Thyroid gland (tissue), 4 donors: ENCODE measurements at regions of chr10 and their contacts with region 1.

Region 1: DNA sequence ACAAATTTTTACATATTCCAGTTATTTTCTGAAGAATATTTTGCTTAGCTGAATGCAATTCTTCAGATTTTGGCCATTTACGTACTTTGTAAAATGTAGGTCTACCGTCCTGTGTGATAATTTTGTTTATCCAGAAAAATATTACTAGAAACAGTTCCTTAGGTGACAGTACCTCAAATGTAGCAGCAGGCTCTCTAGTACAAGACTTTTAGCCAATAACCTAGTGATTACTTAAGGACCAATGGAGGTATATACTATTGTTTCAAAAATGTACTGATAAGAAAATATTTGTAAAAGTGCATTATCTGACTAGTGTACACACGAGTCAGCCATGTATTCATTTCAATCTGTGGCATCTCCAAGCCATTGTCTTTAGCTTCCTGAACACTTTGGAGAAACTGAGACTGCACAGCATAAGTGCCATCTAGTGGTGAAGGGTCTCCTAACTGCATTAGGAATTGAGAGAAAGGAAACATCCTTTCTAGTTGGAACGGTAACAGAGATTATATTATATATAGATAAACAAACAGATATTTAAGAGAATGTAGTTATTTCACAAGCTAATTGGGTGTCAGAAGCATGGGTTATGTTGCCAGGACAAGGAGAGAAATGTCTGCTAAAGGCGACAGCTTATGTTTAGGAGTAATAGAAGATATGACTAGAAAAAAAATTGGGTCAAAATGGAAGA is 23.7 kb downstream of the RTKN2 start:
- DNase-seq: peak in 1 of 2 donors; percentile 7
- H3K4me3 ChIP-seq: no peak overlapping the region
- H3K27ac ChIP-seq: no peak overlapping the region
- H3K4me1 ChIP-seq: peaks cover 0 to 4% of the 10 kb centered on the region in 2 donors
- H3K27me3 ChIP-seq: no peaks in the 10 kb centered on the region
- CTCF ChIP-seq: peak; percentile 59 to 79 (median 72)
- POLR2A ChIP-seq: no peak

Region 2: DNA sequence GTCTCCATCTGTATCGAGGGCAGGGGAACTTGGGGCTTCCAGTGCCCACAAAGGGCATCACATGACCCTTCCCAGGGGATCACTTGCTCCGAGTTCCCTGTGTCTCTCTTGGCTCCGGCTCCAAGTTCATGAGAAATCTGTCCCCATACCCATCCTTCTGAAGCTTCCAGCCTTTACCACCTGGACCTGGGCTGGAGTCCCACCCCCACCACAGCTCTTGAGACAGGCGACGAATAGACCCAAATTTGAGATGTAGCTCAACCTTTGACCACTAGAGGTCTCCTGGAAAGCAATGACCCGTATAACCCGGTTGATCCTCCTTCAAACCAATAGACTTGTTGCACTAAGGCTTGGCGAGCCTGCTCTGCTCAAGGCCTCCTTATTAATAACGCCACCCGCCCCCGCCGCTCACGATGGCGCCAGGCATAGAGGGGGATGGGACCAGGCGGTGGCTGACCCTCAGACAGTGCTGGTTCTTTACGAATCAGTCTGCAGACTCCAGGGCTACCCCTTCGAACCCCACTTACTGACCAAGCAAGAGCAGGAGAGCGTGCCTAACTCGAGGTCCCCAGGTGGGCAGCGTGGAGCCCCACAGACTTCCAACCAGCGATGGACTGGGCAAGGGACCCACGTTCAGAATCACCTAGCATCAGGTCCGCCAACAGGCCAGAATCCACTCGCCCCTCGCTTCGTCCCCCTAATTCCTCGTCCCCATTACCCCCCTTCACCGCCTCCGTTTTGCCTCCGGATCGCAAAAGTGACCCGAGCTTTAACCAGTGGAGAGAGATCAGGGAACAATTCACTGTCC is 347.9 kb before region 1 on chr10:
- intact Hi-C with region 1: loop called (anchors 10 kb)
- DNase-seq: peak; percentile 55 to 62
- H3K4me3 ChIP-seq: peak overlapping the region in 2 of 3 donors; percentile 2 to 28
- H3K27ac ChIP-seq: peak overlapping the region in 2 of 3 donors; percentile 25 to 42
- H3K4me1 ChIP-seq: peaks cover 6 to 7% of the 10 kb centered on the region in 2 donors
- H3K27me3 ChIP-seq: no peaks in the 10 kb centered on the region
- CTCF ChIP-seq: peak in 5 of 6 experiments; percentile 31 to 65 (median 59)
- POLR2A ChIP-seq: peak in 1 of 2 donors; percentile 46

Region 3: DNA sequence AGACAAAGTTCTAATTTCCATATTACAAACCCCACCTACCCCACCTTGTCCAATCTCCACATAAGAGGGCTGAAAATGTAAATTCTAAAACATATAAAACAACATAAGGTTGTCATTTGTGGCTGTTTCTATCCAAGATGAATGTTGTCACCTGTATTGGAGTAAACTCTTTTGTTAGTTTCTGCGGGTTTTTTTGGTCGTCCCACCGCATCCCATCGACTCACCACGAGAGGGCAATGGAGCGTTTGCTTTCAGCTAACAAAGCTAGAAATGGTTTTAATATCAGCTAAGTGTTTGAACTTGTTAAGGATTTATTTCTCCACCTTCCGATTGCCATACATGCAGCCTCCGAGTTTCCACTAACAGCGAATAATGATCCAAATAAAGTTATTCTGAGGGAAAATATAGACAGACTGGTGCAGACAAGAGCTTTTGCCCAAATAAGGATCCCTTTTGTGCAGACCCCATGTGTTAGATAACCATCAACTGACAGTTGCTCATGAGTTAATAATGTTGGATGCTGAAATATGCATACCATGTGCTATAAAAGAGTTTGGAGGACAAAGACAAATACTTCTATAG is 206.2 kb before region 1 on chr10:
- intact Hi-C with region 1: loop called (anchors 5 kb)
- DNase-seq: peak; percentile 57 to 71
- H3K4me3 ChIP-seq: no peak overlapping the region
- H3K27ac ChIP-seq: no peak overlapping the region
- H3K4me1 ChIP-seq: peaks cover 0 to 12% of the 10 kb centered on the region in 2 donors
- H3K27me3 ChIP-seq: no peaks in the 10 kb centered on the region
- CTCF ChIP-seq: peak; percentile 37 to 81 (median 70)
- POLR2A ChIP-seq: no peak